CD4-positive, alpha-beta memory T cell (primary cell): ENCODE measurements at regions of chr20 and their contacts with region 1.

Region 1: GRCh38 chr20:53594068-53595017 is 704 bp upstream of the ZNF217 start:
- DNase-seq: peak; percentile 92 to 99 (median 96)
- H3K4me3 ChIP-seq: peak overlapping the region in 1 of 2 donors; percentile 79
- H3K4me3 Mint-ChIP-seq: peak overlapping the region; percentile 84 to 97 (median 90)
- H3K27ac ChIP-seq: peak overlapping the region; percentile 86
- H3K27ac Mint-ChIP-seq: peak overlapping the region; percentile 95 to 100 (median 97)
- H3K4me1 ChIP-seq: peaks cover 52% of the 10 kb centered on the region
- H3K4me1 Mint-ChIP-seq: peaks cover 41 to 74% (median 51%) of the 10 kb centered on the region in 4 donors
- H3K27me3 ChIP-seq: no peaks in the 10 kb centered on the region
- H3K27me3 Mint-ChIP-seq: no peaks in the 10 kb centered on the region

Region 2: GRCh38 chr20:53428996-53429395 is 165.3 kb before region 1 on chr20:
- CTCF ChIA-PET with region 1: no interaction called
- POLR2A ChIA-PET with region 1: no interaction called
- intact Hi-C with region 1: no loop called
- DNase-seq: no peak
- H3K4me3 ChIP-seq: no peak overlapping the region
- H3K4me3 Mint-ChIP-seq: no peak overlapping the region
- H3K27ac ChIP-seq: no peak overlapping the region
- H3K27ac Mint-ChIP-seq: no peak overlapping the region
- H3K4me1 ChIP-seq: no peaks in the 10 kb centered on the region
- H3K4me1 Mint-ChIP-seq: peaks cover 0 to 3% (median 0%) of the 10 kb centered on the region in 4 donors
- H3K27me3 ChIP-seq: no peaks in the 10 kb centered on the region
- H3K27me3 Mint-ChIP-seq: peaks cover 1 to 2% of the 10 kb centered on the region in 2 donors

Region 3: GRCh38 chr20:53444401-53445149 is 149.8 kb before region 1 on chr20:
- CTCF ChIA-PET with region 1: no interaction called
- POLR2A ChIA-PET with region 1: no interaction called
- intact Hi-C with region 1: no loop called
- DNase-seq: no peak
- H3K4me3 ChIP-seq: no peak overlapping the region
- H3K4me3 Mint-ChIP-seq: no peak overlapping the region
- H3K27ac ChIP-seq: no peak overlapping the region
- H3K27ac Mint-ChIP-seq: no peak overlapping the region
- H3K4me1 ChIP-seq: no peaks in the 10 kb centered on the region
- H3K4me1 Mint-ChIP-seq: peaks cover 0 to 2% (median 0%) of the 10 kb centered on the region in 4 donors
- H3K27me3 ChIP-seq: no peaks in the 10 kb centered on the region
- H3K27me3 Mint-ChIP-seq: peaks cover 1 to 5% of the 10 kb centered on the region in 2 donors

Region 4: GRCh38 chr20:53611449-53611894 is 17.1 kb after region 1 on chr20:
- CTCF ChIA-PET with region 1: interaction called, 11 read pairs
- POLR2A ChIA-PET with region 1: interaction called, 198 read pairs
- intact Hi-C with region 1: loop called (anchors 1 kb)
- DNase-seq: no peak
- H3K4me3 ChIP-seq: no peak overlapping the region
- H3K4me3 Mint-ChIP-seq: no peak overlapping the region
- H3K27ac ChIP-seq: no peak overlapping the region
- H3K27ac Mint-ChIP-seq: peak overlapping the region in 2 of 7 donors; percentile 13 to 73
- H3K4me1 ChIP-seq: peaks cover 33% of the 10 kb centered on the region
- H3K4me1 Mint-ChIP-seq: peaks cover 13 to 28% (median 22%) of the 10 kb centered on the region in 4 donors
- H3K27me3 ChIP-seq: no peaks in the 10 kb centered on the region
- H3K27me3 Mint-ChIP-seq: no peaks in the 10 kb centered on the region

Region 5: GRCh38 chr20:53623454-53624211 is 29.3 kb after region 1 on chr20:
- CTCF ChIA-PET with region 1: interaction called, 12 read pairs
- POLR2A ChIA-PET with region 1: interaction called, 68 read pairs
- intact Hi-C with region 1: no loop called
- DNase-seq: peak; percentile 29 to 47 (median 31)
- H3K4me3 ChIP-seq: peak overlapping the region; percentile 43 to 67
- H3K4me3 Mint-ChIP-seq: peak overlapping the region; percentile 82 to 90 (median 88)
- H3K27ac ChIP-seq: peak overlapping the region; percentile 58
- H3K27ac Mint-ChIP-seq: peak overlapping the region; percentile 88 to 97 (median 95)
- H3K4me1 ChIP-seq: peaks cover 37% of the 10 kb centered on the region
- H3K4me1 Mint-ChIP-seq: peaks cover 29 to 38% (median 35%) of the 10 kb centered on the region in 4 donors
- H3K27me3 ChIP-seq: no peaks in the 10 kb centered on the region
- H3K27me3 Mint-ChIP-seq: no peaks in the 10 kb centered on the region

Region 6: DNA sequence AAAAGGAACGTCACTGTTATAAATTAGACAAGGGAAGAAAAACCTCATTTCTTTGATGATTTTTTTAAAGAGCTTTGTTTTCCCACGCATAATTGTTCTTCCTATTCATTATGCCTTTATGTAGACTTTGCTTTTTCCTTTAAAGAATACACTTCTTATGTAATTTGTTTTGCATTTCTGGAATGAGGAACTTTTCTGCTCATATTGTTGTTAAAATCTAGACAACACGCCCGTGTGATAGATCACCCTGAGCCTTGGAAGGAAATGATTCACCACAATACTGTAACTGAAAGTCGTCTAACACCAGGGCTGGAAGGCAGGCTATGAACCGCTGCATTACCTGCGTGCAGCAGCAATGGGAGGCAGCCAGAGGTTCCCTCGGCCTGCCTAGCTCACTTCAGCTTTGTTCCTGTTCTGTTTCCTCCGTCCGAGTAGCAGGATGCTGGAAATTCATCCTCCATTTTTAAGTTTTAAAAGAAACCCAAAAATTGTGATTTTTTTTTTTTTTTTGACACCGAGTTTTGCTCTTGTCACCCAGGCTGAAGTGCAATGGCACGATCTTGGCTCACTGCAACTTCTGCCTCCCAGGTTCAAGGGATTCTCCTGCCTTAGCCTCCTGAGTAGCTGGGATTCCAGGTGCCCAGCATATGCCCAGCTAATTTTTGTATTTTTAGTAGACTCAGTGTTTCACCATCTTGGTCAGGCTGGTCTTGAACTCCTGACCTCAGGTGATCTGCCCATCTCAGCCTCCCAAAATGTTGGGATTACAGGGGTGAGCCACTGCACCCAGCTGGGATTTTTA is 48.9 kb after region 1 on chr20:
- CTCF ChIA-PET with region 1: interaction called, 12 read pairs
- POLR2A ChIA-PET with region 1: interaction called, 80 read pairs
- intact Hi-C with region 1: loop called (anchors 2 kb)
- DNase-seq: peak; percentile 67 to 84 (median 73)
- H3K4me3 ChIP-seq: peak overlapping the region; percentile 19 to 26
- H3K4me3 Mint-ChIP-seq: peak overlapping the region; percentile 75 to 93 (median 86)
- H3K27ac ChIP-seq: peak overlapping the region; percentile 59
- H3K27ac Mint-ChIP-seq: peak overlapping the region; percentile 94 to 99 (median 98)
- H3K4me1 ChIP-seq: peaks cover 37% of the 10 kb centered on the region
- H3K4me1 Mint-ChIP-seq: peaks cover 14 to 52% (median 37%) of the 10 kb centered on the region in 4 donors
- H3K27me3 ChIP-seq: no peaks in the 10 kb centered on the region
- H3K27me3 Mint-ChIP-seq: no peaks in the 10 kb centered on the region

Region 7: DNA sequence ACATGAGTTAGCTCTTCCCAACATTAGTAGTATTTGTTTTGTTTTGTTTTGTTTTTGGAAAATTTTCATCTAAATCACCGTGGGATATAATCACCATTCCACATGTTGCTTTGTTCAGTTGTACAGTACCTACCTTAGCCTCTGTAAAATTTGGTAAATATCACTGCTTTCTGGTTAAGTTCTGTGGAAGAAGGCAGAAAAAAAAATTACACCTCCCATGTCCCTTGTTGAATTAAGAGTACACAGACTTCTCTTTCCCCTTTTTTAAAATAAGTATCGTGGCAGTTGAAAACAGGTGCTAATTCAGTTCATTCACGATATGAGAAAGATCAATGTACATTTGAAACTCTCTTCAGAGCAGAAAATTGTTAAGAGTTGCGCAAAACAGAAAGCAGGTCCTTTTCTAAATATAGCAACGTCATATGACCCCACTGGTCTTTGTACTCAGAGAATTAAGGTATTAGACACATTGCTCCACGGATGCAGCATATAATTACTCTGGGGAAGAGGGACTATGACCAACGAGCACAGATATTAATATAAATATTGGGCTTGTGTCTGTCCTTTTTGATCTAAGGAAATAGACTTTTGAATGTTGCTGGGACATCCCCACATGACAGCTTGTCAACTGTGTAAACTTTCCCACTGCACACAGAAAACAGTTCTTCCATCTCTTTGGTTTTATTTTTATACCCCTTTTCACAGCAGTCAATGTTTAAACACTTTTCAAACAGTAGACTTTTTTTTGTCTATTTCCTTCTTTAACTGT is 57.9 kb after region 1 on chr20:
- CTCF ChIA-PET with region 1: interaction called, 3 read pairs
- POLR2A ChIA-PET with region 1: interaction called, 7 read pairs
- intact Hi-C with region 1: loop called (anchors 2 kb)
- DNase-seq: peak; percentile 21 to 44 (median 32)
- H3K4me3 ChIP-seq: peak overlapping the region; percentile 4 to 11
- H3K4me3 Mint-ChIP-seq: peak overlapping the region; percentile 49 to 82 (median 74)
- H3K27ac ChIP-seq: peak overlapping the region; percentile 55
- H3K27ac Mint-ChIP-seq: peak overlapping the region; percentile 80 to 97 (median 94)
- H3K4me1 ChIP-seq: peaks cover 43% of the 10 kb centered on the region
- H3K4me1 Mint-ChIP-seq: peaks cover 27 to 41% (median 35%) of the 10 kb centered on the region in 4 donors
- H3K27me3 ChIP-seq: no peaks in the 10 kb centered on the region
- H3K27me3 Mint-ChIP-seq: no peaks in the 10 kb centered on the region

Region 8: GRCh38 chr20:53660078-53660909 is 66.0 kb after region 1 on chr20:
- CTCF ChIA-PET with region 1: interaction called, 5 read pairs
- POLR2A ChIA-PET with region 1: interaction called, 47 read pairs
- intact Hi-C with region 1: loop called (anchors 2 kb)
- DNase-seq: peak in 2 of 5 donors; percentile 16 to 18
- H3K4me3 ChIP-seq: peak overlapping the region; percentile 56 to 66
- H3K4me3 Mint-ChIP-seq: peak overlapping the region; percentile 77 to 91 (median 88)
- H3K27ac ChIP-seq: peak overlapping the region; percentile 41
- H3K27ac Mint-ChIP-seq: peak overlapping the region; percentile 63 to 93 (median 89)
- H3K4me1 ChIP-seq: peaks cover 46% of the 10 kb centered on the region
- H3K4me1 Mint-ChIP-seq: peaks cover 36 to 70% (median 50%) of the 10 kb centered on the region in 4 donors
- H3K27me3 ChIP-seq: no peaks in the 10 kb centered on the region
- H3K27me3 Mint-ChIP-seq: no peaks in the 10 kb centered on the region

Region 9: GRCh38 chr20:53839423-53840176 is 245.3 kb after region 1 on chr20:
- CTCF ChIA-PET with region 1: no interaction called
- POLR2A ChIA-PET with region 1: interaction called, 12 read pairs
- intact Hi-C with region 1: no loop called
- DNase-seq: peak; percentile 70 to 80 (median 77)
- H3K4me3 ChIP-seq: no peak overlapping the region
- H3K4me3 Mint-ChIP-seq: peak overlapping the region; percentile 33 to 98 (median 82)
- H3K27ac ChIP-seq: peak overlapping the region; percentile 44
- H3K27ac Mint-ChIP-seq: peak overlapping the region; percentile 75 to 100 (median 99)
- H3K4me1 ChIP-seq: peaks cover 89% of the 10 kb centered on the region
- H3K4me1 Mint-ChIP-seq: peaks cover 45 to 82% (median 64%) of the 10 kb centered on the region in 4 donors
- H3K27me3 ChIP-seq: no peaks in the 10 kb centered on the region
- H3K27me3 Mint-ChIP-seq: no peaks in the 10 kb centered on the region

Region 10: DNA sequence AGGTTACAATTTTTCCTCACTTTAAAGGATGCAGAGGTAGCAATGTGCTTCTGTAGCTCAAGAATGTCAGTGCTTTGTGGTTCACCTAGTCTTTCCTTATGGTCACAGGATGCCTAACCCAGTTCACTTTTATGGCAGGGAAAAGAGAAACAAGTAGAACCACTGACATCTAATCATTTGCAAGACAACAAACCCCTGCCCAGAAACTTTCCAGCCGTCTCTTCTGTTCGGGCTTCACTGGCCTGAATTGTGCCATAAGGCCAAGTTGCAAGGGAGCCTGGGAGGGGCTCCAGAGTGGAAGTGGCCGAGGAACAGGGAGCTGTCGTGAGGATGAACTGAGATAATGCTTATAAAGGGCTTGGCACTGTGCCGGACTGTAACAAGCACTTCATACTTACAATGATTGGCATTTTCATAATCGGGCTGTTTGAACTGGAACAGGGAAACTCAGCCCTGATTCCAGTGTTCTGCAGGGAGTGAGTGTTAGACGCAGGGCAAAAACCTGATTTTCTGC is 263.4 kb after region 1 on chr20:
- CTCF ChIA-PET with region 1: no interaction called
- POLR2A ChIA-PET with region 1: no interaction called
- intact Hi-C with region 1: no loop called
- DNase-seq: no peak
- H3K4me3 ChIP-seq: no peak overlapping the region
- H3K4me3 Mint-ChIP-seq: no peak overlapping the region
- H3K27ac ChIP-seq: no peak overlapping the region
- H3K27ac Mint-ChIP-seq: peak overlapping the region in 2 of 7 donors; percentile 9 to 35
- H3K4me1 ChIP-seq: peaks cover 7% of the 10 kb centered on the region
- H3K4me1 Mint-ChIP-seq: peaks cover 8 to 27% (median 17%) of the 10 kb centered on the region in 4 donors
- H3K27me3 ChIP-seq: no peaks in the 10 kb centered on the region
- H3K27me3 Mint-ChIP-seq: no peaks in the 10 kb centered on the region

Region 11: GRCh38 chr20:54017809-54018208 is 423.5 kb after region 1 on chr20:
- CTCF ChIA-PET with region 1: no interaction called
- POLR2A ChIA-PET with region 1: no interaction called
- intact Hi-C with region 1: no loop called
- DNase-seq: no peak
- H3K4me3 ChIP-seq: no peak overlapping the region
- H3K4me3 Mint-ChIP-seq: no peak overlapping the region
- H3K27ac ChIP-seq: no peak overlapping the region
- H3K27ac Mint-ChIP-seq: no peak overlapping the region
- H3K4me1 ChIP-seq: no peaks in the 10 kb centered on the region
- H3K4me1 Mint-ChIP-seq: peaks cover 0 to 1% (median 0%) of the 10 kb centered on the region in 4 donors
- H3K27me3 ChIP-seq: no peaks in the 10 kb centered on the region
- H3K27me3 Mint-ChIP-seq: peaks cover 6 to 9% of the 10 kb centered on the region in 2 donors